ENCODE measurements at regions of chr12 and their contacts with region 1.

Region 1: GRCh38 chr12:4538207-4539160 is at the start of gene RAD51AP1:
- DNase-seq: peak; percentile 93
- H3K4me3 ChIP-seq: peak within 1 kb of the TSS; percentile 62 to 80
- H3K27ac ChIP-seq: peak within 1 kb of the TSS; percentile 91 to 92
- H3K4me1 ChIP-seq: peaks cover 4% of the 10 kb centered on the region
- H3K27me3 ChIP-seq: no peaks in the 10 kb centered on the region
- CTCF ChIP-seq: peak in 1 of 4 experiments; percentile 27
- POLR2A ChIP-seq: no peak
- total RNA-seq, gene RAD51AP1: 5.5 to 7.6 TPM

Region 2: GRCh38 chr12:4307593-4308333 is 230.7 kb before region 1 on chr12:
- intact Hi-C with region 1: loop called (anchors 5 kb)
- DNase-seq: peak; percentile 77
- H3K4me3 ChIP-seq: peak overlapping the region in 1 of 2 donors; percentile 8
- H3K27ac ChIP-seq: peak overlapping the region in 1 of 2 donors; percentile 45
- H3K4me1 ChIP-seq: no peaks in the 10 kb centered on the region
- H3K27me3 ChIP-seq: no peaks in the 10 kb centered on the region
- CTCF ChIP-seq: peak in 3 of 4 experiments; percentile 46 to 85 (median 68)
- POLR2A ChIP-seq: no peak

Region 3: DNA sequence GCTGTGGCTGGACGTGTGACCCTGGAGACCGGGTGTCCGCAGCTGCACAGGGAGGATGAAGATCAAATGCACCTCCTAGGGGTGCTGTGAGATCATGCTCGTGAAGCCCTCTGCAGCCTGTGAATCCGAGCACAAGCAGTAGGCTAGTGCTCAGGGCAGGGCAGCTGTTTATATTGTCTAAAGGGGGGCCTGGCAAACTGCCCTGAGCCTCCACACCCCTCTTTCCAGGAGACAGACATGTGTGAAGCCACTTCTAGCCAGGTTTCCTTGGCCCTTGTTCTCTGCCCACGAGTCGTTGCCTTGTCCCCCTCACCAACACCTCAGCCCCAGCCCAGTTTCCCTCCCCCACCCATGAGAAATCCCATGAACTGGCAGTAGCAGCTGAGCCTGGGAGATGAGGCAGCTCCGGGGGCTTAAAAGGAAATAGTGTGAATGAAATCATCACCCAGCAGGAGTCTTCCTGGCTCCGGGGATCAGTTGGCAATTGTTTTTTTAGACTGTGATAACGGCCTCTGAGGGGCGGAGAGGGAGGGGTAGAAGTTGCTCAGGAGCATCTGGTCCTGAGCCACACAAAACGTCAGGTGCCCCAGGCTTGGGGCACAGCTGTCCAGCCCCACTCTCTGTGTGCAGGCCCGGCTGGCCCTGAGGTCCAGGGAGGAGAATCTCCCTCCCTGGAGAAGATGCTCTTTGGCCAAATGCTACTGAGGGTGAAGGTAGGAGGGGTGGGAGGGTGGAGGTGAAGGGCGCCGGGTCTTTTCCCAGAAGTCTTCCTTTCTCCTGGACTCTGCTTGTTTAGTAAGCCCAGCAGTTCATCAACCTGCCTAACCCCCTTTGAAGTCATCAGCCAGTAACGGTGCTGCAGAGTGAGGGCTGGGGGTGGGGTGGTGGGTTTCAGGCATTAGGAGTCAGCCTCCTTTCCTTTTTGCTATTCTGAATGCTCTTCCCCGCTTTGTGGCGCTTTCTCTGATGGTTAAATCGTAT is 96.8 kb before region 1 on chr12:
- intact Hi-C with region 1: no loop called
- DNase-seq: no peak
- H3K4me3 ChIP-seq: no peak overlapping the region
- H3K27ac ChIP-seq: no peak overlapping the region
- H3K4me1 ChIP-seq: no peaks in the 10 kb centered on the region
- H3K27me3 ChIP-seq: peaks cover 3% of the 10 kb centered on the region
- CTCF ChIP-seq: no peak
- POLR2A ChIP-seq: no peak

Region 4: DNA sequence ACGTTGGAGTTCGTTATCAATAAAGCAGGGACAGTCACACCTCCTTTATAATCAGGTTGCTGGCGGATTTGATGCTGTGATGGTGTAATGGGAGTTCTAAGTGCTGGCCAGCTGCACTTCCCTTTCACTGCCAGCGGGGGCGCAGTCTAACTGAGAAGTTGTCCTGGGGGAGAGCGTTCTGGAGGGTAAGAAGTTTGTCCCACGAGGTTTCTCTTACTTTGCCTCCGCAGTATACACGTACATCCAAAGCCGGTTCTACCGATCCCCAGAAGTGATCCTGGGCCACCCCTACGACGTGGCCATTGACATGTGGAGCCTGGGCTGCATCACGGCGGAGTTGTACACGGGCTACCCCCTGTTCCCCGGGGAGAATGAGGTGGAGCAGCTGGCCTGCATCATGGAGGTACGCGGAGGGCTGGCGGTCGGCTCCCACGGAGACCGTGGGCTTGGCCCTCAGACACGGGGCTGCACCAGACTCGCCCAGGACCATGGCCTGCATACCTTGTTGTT is 66.3 kb after region 1 on chr12:
- intact Hi-C with region 1: loop called (anchors 5 kb)
- DNase-seq: peak; percentile 84
- H3K4me3 ChIP-seq: peak overlapping the region; percentile 60 to 70
- H3K27ac ChIP-seq: peak overlapping the region; percentile 45 to 62
- H3K4me1 ChIP-seq: no peaks in the 10 kb centered on the region
- H3K27me3 ChIP-seq: no peaks in the 10 kb centered on the region
- CTCF ChIP-seq: peak; percentile 84 to 95 (median 93)
- POLR2A ChIP-seq: no peak

Region 5: DNA sequence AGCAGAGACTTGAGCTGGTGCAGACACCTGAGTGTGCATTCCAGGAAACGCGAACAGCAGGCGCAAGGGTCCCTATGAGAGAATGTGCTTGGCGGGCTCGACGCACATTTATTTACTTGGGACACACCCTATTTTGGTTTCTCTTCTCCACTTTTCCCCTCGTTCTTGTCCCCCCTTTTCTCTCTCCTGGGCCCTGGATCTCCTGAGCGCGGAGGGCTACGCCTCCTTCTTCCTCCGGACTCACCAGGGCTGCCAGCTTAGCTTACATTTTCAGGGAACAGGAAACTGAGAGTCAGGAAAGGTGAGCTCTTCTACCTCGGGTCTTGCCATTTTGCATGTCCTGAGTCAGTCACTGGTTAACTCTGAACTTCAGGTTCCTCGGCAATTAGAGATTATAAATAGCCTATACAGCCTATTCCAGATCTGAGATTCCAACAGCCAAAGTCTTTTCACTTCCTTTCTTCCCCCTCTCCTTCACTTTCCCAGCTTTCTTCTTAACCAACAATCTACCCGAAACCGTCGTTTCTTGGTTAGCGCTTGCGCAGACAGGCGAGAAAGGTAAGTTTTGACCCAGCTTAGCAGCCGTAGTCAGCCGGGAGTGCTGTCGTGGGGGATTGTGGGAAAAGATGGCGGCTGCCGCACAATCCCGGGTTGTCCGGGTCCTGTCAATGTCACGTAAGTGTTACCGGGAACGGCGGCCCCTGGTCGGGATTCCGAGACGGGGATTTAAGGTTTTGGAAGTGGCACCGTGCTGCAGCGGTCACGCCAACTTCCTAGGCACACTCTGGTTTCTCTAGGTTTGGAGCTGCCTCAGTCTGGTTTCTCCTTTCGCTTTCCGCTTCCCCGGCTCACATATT is 110.2 kb after region 1 on chr12 and contains the starts of genes AKAP3 and NDUFA9:
- intact Hi-C with region 1: loop called (anchors 10 kb)
- DNase-seq: peak; percentile 81
- H3K4me3 ChIP-seq: peak within 1 kb of the TSS; percentile 73 to 78
- H3K27ac ChIP-seq: peak within 1 kb of the TSS; percentile 84 to 89
- H3K4me1 ChIP-seq: no peaks in the 10 kb centered on the region
- H3K27me3 ChIP-seq: no peaks in the 10 kb centered on the region
- CTCF ChIP-seq: peak in 1 of 4 experiments; percentile 14
- POLR2A ChIP-seq: peak; percentile 30
- total RNA-seq, gene AKAP3: 1.8 to 13.9 TPM
- total RNA-seq, gene NDUFA9: 21.8 to 38.8 TPM